ENCODE measurements at regions of chr3 and their contacts with region 1.

Region 1: DNA sequence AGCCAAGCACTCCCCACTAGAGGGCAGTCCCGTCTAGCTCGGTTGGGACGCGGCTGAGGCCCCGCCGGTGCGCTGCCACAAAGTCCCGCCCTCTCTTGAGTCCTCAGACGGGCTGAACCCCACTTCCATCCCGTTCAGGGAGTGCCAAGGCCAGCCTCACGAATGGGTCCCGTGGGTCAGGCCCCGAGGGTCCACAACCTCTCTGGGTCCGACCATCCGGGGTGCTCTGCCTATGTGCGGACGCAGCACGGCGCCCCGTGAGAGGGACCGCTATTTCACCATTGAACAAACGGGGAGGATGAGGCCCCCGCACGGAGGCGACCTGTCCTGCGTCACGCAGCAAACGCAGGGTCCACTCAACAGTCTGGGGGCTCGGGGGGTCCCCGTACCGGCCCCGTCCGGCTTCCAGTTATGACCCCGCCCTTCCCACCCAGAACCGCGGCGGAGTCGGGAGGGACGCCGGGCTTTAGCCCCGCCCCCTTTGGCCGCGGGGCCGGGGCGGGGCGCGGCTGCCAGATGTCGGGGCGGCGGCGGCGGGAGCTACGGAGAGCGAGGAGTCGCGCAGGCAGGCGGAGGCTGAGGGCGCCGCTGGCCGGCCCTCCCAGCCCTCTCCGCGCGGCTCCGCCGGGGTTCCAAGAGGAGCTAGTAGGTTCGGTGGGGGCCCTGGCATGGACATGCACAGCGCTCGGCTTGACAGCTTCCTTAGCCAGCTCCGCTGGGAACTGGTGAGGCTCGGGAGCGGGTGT is at the start of gene INKA1:
- DNase-seq: peak; percentile 90 to 92 (median 90)
- ATAC-seq: peak; percentile 84
- H3K4me3 ChIP-seq: peak within 1 kb of the TSS; percentile 78 to 86
- H3K27ac ChIP-seq: peak within 1 kb of the TSS; percentile 47 to 75 (median 60)
- H3K4me1 ChIP-seq: peaks cover 49% of the 10 kb centered on the region
- H3K27me3 ChIP-seq: no peaks in the 10 kb centered on the region
- CTCF ChIP-seq: peak; percentile 78 to 95 (median 92)
- POLR2A ChIP-seq: peak in 2 of 3 donors; percentile 33 to 37
- total RNA-seq, gene INKA1: 2.6 TPM in 1 of 2 donors, not detected in the other

Region 2: DNA sequence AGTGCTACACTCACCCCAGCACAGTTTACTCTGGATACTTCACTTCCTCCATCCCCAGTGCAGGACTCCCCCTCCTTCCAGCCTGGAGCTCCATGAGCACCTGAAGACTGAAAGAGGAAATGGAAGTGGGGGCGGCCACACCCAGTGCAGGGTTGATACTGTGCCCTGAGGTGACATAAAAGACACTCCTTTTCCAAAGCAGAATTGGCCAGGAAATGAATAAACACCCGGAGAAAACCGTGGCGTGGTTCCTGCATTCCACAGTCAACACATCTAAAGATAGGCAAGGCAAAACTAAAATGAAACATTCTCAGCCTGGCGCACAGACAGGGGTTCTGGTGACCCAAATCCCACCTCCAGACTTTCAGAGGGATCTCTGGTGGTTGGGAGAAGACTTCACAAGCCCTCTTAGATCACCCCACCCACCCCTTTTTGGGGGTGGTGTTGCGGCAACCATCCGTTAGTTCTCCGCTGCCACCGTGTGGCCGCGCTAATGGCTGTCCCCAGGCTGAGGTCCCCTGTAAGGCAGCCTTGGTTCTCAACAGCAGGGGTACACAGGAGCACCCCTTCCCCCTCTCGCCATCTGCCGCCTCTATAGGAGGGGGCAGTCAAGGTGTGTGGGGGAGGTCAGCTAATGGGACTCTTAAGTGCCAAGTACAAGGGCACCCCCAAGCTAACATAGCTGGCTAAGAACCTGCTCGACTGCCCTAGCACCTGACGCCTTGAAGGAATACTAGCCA is 103.3 kb after region 1 on chr3:
- intact Hi-C with region 1: loop called (anchors 5 kb)
- DNase-seq: peak; percentile 49 to 63 (median 52)
- ATAC-seq: peak; percentile 28
- H3K4me3 ChIP-seq: no peak overlapping the region
- H3K27ac ChIP-seq: peak overlapping the region; percentile 31 to 70 (median 52)
- H3K4me1 ChIP-seq: peaks cover 44% of the 10 kb centered on the region
- H3K27me3 ChIP-seq: no peaks in the 10 kb centered on the region
- CTCF ChIP-seq: peak; percentile 45 to 70 (median 53)
- POLR2A ChIP-seq: peak in 1 of 3 donors; percentile 7

Measured in body of pancreas (tissue), 4 donors.